ENCODE measurements at regions of chr2 and their contacts with region 1.

Region 1: GRCh38 chr2:74223941-74224770 is 25.7 kb downstream of the MTHFD2 start:
- DNase-seq: no peak
- ATAC-seq: no peak
- H3K4me3 ChIP-seq: no peak overlapping the region
- H3K27ac ChIP-seq: no peak overlapping the region
- H3K4me1 ChIP-seq: peaks cover 3% of the 10 kb centered on the region in 2 donors
- H3K27me3 ChIP-seq: no peaks in the 10 kb centered on the region

Region 2: GRCh38 chr2:74206180-74206688 is 17.9 kb before region 1 on chr2:
- intact Hi-C with region 1: loop called in 1 of 2 experiments (anchors 2 kb)
- DNase-seq: no peak
- ATAC-seq: peak; percentile 19
- H3K4me3 ChIP-seq: no peak overlapping the region
- H3K27ac ChIP-seq: peak overlapping the region in 1 of 2 donors; percentile 72
- H3K4me1 ChIP-seq: peaks cover 4 to 7% of the 10 kb centered on the region in 2 donors
- H3K27me3 ChIP-seq: no peaks in the 10 kb centered on the region

Region 3: GRCh38 chr2:74278176-74278575 is 54.0 kb after region 1 on chr2:
- intact Hi-C with region 1: no loop called
- DNase-seq: no peak
- ATAC-seq: no peak
- H3K4me3 ChIP-seq: no peak overlapping the region
- H3K27ac ChIP-seq: no peak overlapping the region
- H3K4me1 ChIP-seq: no peaks in the 10 kb centered on the region
- H3K27me3 ChIP-seq: no peaks in the 10 kb centered on the region

Measured in aorta (tissue), 5 donors.